Activated CD4-positive, alpha-beta T cell treated with anti-CD3 and anti-CD28 coated beads, Interleukin-2, amount 10 ng/mL, durations not matched to agents 24 days and 14 days (primary cell): ENCODE measurements at regions of chr4 and their contacts with region 1.

Region 1: DNA sequence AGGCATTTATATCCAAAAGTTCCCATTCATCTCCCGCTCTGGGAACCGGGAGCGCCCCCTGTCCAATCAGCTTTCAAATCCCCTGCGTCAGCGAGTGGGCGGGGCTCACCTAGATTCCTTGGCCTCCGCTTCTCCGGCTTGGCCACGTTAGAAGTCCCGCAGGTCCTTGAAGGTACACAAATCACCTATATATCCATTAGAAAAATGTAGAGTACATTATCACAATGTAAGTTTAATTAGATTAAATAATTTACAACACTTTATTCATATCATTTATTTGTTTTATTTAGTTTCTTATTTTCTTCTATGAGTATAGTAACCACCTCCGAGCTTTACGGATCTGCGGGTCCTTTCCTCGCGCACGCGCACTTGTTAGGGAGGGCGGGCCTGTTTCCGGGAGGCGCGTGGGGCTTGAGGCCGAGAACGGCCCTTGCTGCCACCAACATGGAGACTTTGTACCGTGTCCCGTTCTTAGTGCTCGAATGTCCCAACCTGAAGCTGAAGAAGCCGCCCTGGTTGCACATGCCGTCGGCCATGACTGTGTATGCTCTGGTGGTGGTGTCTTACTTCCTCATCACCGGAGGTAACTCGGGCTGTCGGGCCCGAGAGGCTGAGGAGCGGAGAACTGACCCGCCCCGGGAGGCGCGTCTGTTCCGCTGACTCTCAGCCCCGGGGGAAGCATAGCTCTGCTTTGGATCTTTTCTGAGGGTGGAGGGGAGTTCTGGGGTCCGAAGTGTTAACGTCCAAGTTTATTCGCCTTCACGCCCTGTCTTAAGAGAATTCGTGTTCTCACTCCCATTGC is at the start of gene OSTC:
- DNase-seq: peak; percentile 98
- H3K4me3 Mint-ChIP-seq: peak within 1 kb of the TSS; percentile 95
- H3K27ac Mint-ChIP-seq: peak within 1 kb of the TSS; percentile 86
- H3K4me1 Mint-ChIP-seq: peaks cover 21% of the 10 kb centered on the region
- H3K27me3 Mint-ChIP-seq: no peaks in the 10 kb centered on the region
- total RNA-seq, gene OSTC: 91.2 and 93.3 TPM in 2 replicates

Region 2: DNA sequence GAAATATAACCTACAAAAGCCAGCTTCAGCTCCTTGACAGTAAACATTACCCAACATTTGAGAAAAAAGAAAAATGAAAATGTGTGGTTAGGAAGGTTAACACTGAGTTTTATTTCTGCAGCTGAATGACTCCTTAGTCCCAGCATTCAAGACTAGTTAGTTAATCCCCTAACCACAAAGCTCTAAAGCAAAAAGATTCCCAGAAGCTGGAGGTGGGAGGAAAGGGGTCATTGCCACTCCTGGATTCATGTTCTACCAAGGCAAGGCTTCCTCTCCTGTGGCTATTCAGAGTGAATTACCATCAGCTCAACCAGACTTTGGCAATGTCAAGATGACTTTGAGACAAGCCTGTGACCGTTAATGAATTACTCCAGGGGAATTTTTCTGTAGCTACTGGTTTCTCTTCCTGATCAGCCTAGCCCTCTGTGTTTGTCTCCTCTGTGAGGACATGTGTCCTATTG is 597.1 kb before region 1 on chr4:
- intact Hi-C with region 1: no loop called
- DNase-seq: no peak
- H3K4me3 Mint-ChIP-seq: peak overlapping the region; percentile 31
- H3K27ac Mint-ChIP-seq: peak overlapping the region; percentile 81
- H3K4me1 Mint-ChIP-seq: peaks cover 62% of the 10 kb centered on the region
- H3K27me3 Mint-ChIP-seq: no peaks in the 10 kb centered on the region

Region 3: DNA sequence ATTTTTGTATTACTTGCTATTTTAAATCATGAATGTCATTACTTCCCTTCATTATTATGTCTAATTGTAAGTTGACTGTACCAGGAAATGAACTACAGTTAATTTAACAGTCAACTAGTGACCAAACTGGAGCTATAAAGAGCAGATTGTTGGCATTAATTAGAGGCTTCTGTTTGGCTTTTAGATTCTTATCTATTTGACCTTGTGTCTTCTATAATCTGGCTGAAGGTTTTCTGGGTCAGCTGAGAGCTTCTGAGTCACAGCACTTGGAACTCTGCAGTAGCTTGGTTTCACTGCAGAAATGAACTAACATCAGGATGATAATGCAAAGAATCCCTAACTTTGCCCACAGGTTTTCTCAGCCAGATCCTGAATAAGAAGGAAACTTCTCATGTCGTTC is 312.5 kb before region 1 on chr4:
- intact Hi-C with region 1: no loop called
- DNase-seq: no peak
- H3K4me3 Mint-ChIP-seq: no peak overlapping the region
- H3K27ac Mint-ChIP-seq: no peak overlapping the region
- H3K4me1 Mint-ChIP-seq: peaks cover 15% of the 10 kb centered on the region
- H3K27me3 Mint-ChIP-seq: peaks cover 5% of the 10 kb centered on the region

Region 4: GRCh38 chr4:108620101-108620932 is 30.1 kb before region 1 on chr4 and contains the start of gene RPL34:
- intact Hi-C with region 1: loop called (anchors 1 kb)
- DNase-seq: peak; percentile 99
- H3K4me3 Mint-ChIP-seq: peak within 1 kb of the TSS; percentile 93
- H3K27ac Mint-ChIP-seq: peak within 1 kb of the TSS; percentile 96
- H3K4me1 Mint-ChIP-seq: peaks cover 40% of the 10 kb centered on the region
- H3K27me3 Mint-ChIP-seq: no peaks in the 10 kb centered on the region
- total RNA-seq, gene RPL34: 1,411 and 1,425 TPM in 2 replicates

Region 5: GRCh38 chr4:109406338-109406931 is 756.0 kb after region 1 on chr4:
- intact Hi-C with region 1: loop called (anchors 10 kb)
- DNase-seq: peak; percentile 84
- H3K4me3 Mint-ChIP-seq: no peak overlapping the region
- H3K27ac Mint-ChIP-seq: no peak overlapping the region
- H3K4me1 Mint-ChIP-seq: peaks cover 2% of the 10 kb centered on the region
- H3K27me3 Mint-ChIP-seq: peaks cover 20% of the 10 kb centered on the region